GM13976 (cell line): ENCODE measurements at regions of chr9 and their contacts with region 1.

Region 1: DNA sequence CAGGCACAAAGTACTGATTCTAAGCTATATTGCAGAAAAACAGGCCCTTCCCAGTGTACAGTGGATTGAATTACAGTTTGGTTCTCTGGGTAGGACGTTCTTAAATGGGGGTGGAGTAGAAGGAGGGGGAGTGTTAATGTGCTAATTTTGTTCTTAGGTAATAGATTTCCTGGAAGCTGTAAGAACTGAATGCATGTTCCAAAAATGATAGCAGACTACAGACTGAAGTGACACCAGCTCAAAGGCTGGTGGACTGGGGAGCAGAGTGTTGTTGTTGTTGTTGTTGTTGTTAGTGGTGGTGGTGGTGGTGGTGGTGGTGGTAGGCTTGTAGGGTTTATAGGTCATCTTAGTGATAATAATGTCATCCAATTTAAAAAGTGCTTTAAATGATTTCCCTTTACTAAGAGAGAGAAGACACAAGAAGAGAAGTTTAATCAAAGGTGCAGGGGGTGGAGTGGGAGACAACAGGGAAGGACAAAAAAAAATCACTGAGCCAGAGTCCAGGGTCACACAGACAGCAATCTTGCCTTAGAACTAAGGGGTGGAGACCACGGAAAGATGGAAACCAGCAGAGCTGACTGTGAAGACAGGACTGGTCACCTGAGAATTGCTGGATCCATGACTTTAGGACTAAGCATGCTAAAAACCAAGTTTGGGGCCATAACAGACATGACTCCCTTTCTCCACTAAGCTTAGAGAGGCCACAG is 27.0 kb downstream of the TTLL11 start:
- DNase-seq: no peak
- CTCF ChIP-seq: no peak

Region 2: DNA sequence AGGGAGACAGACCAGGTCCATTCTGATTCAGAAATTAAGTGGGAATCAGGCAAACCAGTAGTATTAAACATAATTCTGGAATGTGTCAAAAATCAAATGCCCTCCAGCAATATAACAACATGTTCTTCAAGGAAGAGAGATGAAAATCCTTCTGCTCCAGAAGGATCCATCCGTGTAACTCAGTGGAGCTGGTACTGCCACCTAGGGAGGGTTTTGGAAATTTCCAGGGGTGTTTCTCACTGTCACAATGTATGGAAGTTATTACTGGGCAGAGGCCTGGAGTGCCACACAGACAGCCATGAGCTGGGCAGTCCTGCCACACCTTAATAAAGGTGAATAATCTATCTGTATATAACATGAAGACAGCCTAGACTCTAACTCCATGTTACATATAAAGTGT is 60.5 kb before region 1 on chr9:
- in situ Hi-C with region 1: loop called (anchors 10 kb)
- DNase-seq: no peak
- CTCF ChIP-seq: no peak

Region 3: DNA sequence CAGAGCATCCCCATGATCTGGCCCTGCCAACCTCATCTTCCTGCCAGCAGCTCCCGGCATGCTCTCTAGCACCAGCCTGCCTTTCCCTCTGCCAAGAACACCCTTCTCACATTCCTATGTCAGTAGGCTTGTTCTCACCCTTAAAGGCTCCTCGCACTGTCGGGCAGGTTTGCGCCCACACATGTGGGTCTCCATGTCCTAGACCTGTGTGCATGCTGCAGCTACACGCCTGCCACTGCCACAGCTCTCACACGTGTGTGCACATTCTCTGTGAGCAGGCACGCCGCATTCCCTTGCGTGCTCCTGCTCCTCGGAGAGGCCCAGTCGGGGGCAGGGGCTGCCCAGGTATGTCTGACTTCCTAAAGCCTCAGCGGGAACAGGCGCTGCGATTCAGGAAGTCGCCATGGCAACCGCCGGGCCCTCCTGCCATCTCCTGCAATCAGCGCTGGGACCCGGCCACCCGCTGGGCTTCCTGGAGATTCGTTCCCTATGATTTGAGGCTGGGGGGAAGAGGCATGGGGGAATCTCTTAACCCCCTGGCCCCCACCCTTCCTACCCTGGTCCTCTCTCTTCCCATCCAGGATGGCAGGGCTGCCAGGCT is 65.4 kb after region 1 on chr9:
- in situ Hi-C with region 1: no loop called
- DNase-seq: no peak
- CTCF ChIP-seq: no peak

Region 4: GRCh38 chr9:122389799-122390481 is 323.9 kb after region 1 on chr9:
- in situ Hi-C with region 1: no loop called
- DNase-seq: no peak
- CTCF ChIP-seq: no peak